H1 (cell line): ENCODE measurements at regions of chr16 and their contacts with region 1.

Region 1: DNA sequence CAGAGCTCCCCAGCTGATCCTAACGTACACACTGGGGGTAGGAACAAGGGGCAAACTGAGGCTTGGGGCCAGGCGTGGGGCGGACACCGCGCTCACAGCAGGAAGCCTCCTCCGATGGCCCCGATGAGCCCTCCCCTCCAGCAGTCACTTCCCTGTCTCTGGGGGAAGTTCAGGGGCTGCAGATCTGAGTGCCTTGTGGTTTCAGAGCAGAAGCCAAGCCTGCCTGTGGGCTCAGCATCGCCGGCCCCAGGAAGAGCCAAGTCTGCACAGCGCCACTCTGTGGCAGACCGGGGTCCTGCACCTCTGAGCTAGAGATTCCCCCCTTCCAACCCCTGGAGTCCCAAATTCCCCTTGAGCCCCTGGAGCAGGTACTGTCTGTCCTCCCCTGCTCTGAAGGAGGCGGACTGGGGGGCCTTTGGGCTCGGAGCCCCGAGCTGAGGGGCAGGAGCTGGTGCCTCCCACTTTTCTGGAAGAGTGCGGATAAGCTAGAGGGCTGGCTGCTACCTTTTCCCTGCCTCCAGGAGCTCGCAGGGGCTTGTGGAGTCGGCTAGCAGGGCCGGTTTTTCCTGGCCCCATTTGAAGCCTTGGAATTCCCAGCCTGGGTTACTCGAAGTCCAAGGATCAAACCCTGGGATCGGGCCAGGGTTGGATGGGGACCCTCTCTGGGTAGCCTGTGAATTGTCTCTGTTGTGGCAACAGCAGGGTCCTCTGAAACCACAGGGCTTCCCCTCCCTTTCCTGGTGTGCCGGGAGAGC is 2.9 kb downstream of the GSE1 start:
- DNase-seq: peak in 1 of 2 experiments; percentile 98
- H3K4me3 ChIP-seq: peak overlapping the region in 3 of 4 experiments; percentile 58 to 92 (median 67); a peak in 4 of 8 replicates
- H3K27ac ChIP-seq: no peak overlapping the region
- H3K4me1 ChIP-seq: peaks cover 4 to 37% (median 27%) of the 10 kb centered on the region in 4 experiments
- H3K27me3 ChIP-seq: no peaks in the 10 kb centered on the region
- CTCF ChIP-seq: peak in 2 of 3 experiments; percentile 92 to 97; a peak in 3 of 4 replicates
- EP300 ChIP-seq: no peak
- POLR2A ChIP-seq: no peak
- RAD21 ChIP-seq: peak; percentile 68 to 74

Region 2: GRCh38 chr16:85402910-85403692 is 212.9 kb before region 1 on chr16:
- CTCF ChIA-PET with region 1: interaction called, 13 read pairs
- POLR2A ChIA-PET with region 1: no interaction called
- DNase-seq: peak in 1 of 2 experiments; percentile 59
- H3K4me3 ChIP-seq: no peak overlapping the region
- H3K27ac ChIP-seq: no peak overlapping the region
- H3K4me1 ChIP-seq: peaks cover 3 to 17% (median 6%) of the 10 kb centered on the region in 4 experiments; a peak in 6 of 7 replicates
- H3K27me3 ChIP-seq: no peaks in the 10 kb centered on the region
- CTCF ChIP-seq: no peak
- EP300 ChIP-seq: no peak
- POLR2A ChIP-seq: no peak
- RAD21 ChIP-seq: no peak

Region 3: GRCh38 chr16:85461814-85462713 is 154.0 kb before region 1 on chr16:
- CTCF ChIA-PET with region 1: interaction called, 16 read pairs
- POLR2A ChIA-PET with region 1: interaction called, 3 read pairs
- DNase-seq: peak in 1 of 2 experiments; percentile 76
- H3K4me3 ChIP-seq: peak overlapping the region; percentile 4 to 57 (median 46)
- H3K27ac ChIP-seq: no peak overlapping the region
- H3K4me1 ChIP-seq: peaks cover 7 to 33% (median 25%) of the 10 kb centered on the region in 4 experiments
- H3K27me3 ChIP-seq: peaks cover 5 to 49% (median 36%) of the 10 kb centered on the region in 4 experiments; a peak in 6 of 7 replicates
- CTCF ChIP-seq: no peak
- EP300 ChIP-seq: no peak
- POLR2A ChIP-seq: no peak
- RAD21 ChIP-seq: no peak

Region 4: DNA sequence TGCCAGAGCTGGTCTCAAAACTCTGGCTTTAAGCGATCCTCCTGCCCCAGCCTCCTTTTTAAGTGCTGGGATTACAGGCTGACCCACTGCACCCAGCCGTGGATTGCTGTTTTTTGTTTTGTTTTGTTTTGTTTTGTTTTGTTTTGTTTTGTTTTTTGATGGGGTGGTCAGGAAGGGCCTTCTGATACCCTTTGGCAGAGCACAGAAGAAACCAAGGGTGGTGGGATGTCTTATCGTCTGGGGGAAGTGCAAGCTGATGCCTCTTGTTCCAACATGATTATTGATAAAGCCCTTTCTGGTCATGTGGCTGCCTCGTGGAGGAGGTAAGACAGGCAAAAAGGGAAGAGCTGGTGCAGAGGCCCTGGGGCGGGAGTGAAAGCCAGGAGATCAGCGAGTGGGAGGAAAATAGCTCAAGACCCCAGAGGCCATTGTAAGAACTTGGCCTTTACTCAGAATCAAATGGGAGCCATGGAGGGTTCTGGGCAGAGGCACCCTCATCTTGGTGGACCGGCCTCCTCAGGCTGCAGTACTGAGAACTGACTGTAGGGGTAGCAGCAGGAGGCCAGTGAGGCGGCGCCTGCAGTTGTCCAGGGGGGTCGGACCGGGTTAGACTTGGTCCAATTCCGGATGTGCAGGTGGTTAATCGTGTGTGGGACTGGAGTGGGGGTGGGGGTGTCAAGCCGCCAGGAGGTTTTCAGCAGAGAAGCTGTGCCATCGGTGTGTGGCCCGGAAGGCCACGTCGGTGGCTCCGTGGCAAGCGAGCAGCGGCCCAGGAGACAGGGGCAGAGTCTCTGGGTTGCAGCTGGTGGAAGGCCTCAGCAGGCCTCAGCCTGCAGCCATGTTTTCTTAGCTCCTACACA is 87.3 kb before region 1 on chr16:
- CTCF ChIA-PET with region 1: interaction called, 18 read pairs
- POLR2A ChIA-PET with region 1: interaction called, 4 read pairs
- DNase-seq: no peak
- H3K4me3 ChIP-seq: no peak overlapping the region
- H3K27ac ChIP-seq: no peak overlapping the region
- H3K4me1 ChIP-seq: peaks cover 3 to 24% (median 13%) of the 10 kb centered on the region in 4 experiments
- H3K27me3 ChIP-seq: no peaks in the 10 kb centered on the region
- CTCF ChIP-seq: peak; percentile 37 to 57 (median 47)
- EP300 ChIP-seq: no peak
- POLR2A ChIP-seq: no peak
- RAD21 ChIP-seq: no peak; a peak in 1 of 4 replicates

Region 5: GRCh38 chr16:85569615-85570212 is 46.3 kb before region 1 on chr16:
- CTCF ChIA-PET with region 1: interaction called, 37 read pairs
- POLR2A ChIA-PET with region 1: interaction called, 4 read pairs
- DNase-seq: no peak
- H3K4me3 ChIP-seq: no peak overlapping the region
- H3K27ac ChIP-seq: no peak overlapping the region; the same call in 1 of the 2 replicates
- H3K4me1 ChIP-seq: peaks cover 24 to 65% (median 41%) of the 10 kb centered on the region in 4 experiments
- H3K27me3 ChIP-seq: peaks cover 0 to 3% (median 0%) of the 10 kb centered on the region in 4 experiments; a peak in 2 of 7 replicates
- CTCF ChIP-seq: no peak
- EP300 ChIP-seq: 0 out of 3 replicates have a peak, but pooled peaks of 1 of the 2 experiments have one; percentile 22
- POLR2A ChIP-seq: no peak
- RAD21 ChIP-seq: no peak; a peak in 1 of 4 replicates

Region 6: DNA sequence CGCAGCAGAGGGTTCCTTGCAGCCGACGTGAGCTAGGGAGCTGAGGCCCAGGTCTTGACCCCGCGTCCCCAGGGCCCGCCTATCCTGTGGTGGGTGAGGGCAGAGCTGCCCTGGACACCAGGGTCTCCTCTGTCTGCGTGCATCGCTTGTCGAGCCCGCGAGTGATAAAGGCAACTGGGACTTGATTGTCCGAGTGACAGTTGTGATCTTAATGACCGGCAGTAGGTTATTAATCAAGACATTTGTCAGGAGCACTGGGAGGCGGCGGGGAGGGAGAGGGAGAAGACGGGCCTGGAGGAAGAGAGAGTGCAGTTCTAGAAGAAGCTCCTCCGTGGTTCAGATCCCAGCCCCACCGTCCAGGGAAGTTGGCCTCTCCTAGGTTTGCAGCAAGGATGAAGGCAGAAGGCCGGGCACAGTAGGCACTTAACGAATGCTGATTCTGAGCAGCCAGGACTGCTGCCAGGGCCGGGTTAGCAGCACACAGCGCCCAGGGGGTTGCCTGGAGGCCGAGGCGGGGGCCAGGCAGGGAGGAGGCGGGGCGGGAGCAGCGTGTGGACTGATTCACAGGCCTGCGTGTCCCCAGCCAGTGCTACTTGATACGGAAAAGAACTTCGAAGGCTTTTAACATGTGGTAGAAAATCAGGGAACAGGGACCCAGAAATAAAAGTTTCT is 14.2 kb before region 1 on chr16:
- CTCF ChIA-PET with region 1: interaction called, 26 read pairs
- POLR2A ChIA-PET with region 1: interaction called, 6 read pairs
- DNase-seq: peak in 1 of 2 experiments; percentile 66
- H3K4me3 ChIP-seq: no peak overlapping the region
- H3K27ac ChIP-seq: no peak overlapping the region
- H3K4me1 ChIP-seq: peaks cover 10 to 58% (median 46%) of the 10 kb centered on the region in 4 experiments
- H3K27me3 ChIP-seq: no peaks in the 10 kb centered on the region
- CTCF ChIP-seq: no peak
- EP300 ChIP-seq: no peak
- POLR2A ChIP-seq: no peak
- RAD21 ChIP-seq: no peak

Region 7: DNA sequence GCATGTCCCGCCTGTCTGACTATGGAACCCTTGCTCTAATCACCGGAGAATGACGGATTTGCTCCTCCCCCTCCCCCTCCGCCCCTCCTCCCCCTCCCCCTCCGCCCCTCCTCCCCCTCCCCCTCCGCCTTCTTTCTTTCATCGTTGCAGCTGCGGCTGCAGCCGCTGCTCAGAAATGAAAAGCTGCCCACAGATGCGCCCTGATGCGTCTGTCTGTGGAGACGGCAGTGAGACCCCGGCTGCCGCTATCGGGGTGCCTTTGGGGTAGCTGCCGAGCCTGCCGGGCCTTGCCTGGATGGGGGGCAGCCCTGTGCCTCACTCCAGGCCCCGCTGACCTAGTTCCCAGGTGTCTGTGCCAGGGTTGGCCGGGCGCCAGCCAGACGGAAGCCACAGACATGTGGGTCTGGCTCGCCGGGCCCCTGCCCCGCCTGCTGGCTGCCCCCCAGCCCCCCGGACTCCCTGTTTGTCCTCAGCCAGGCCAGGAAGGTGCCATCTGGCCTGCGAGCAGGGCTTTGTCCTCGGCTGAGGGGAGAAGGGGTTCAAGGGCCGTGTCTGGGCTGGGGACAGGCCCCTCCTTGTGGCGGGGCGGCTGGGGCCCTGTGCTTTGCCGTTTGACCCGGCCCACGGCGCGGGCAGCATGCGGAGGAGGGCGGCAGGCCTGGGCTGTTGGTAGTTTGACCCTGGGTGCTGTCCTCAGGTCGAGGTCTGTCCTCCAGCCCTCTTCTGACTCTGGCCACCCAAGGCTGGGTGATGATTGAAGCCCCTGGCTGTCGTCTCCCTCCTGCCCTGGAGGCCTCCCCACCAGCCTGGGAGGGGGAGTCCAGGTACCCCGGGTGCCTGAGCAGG is 35.2 kb after region 1 on chr16:
- CTCF ChIA-PET with region 1: interaction called, 17 read pairs
- POLR2A ChIA-PET with region 1: no interaction called
- DNase-seq: no peak
- H3K4me3 ChIP-seq: no peak overlapping the region
- H3K27ac ChIP-seq: no peak overlapping the region
- H3K4me1 ChIP-seq: peaks cover 0 to 5% (median 0%) of the 10 kb centered on the region in 4 experiments; a peak in 2 of 7 replicates
- H3K27me3 ChIP-seq: no peaks in the 10 kb centered on the region
- CTCF ChIP-seq: no peak
- EP300 ChIP-seq: no peak
- POLR2A ChIP-seq: no peak
- RAD21 ChIP-seq: no peak